AG04449 (cell line): ENCODE measurements at regions of chr6 and their contacts with region 1.

Region 1: GRCh38 chr6:154675602-154676088 is 57.6 kb upstream of the SCAF8 start:
- DNase-seq: peak; percentile 88
- H3K4me3 ChIP-seq: no peak overlapping the region
- CTCF ChIP-seq: peak; percentile 88

Region 2: GRCh38 chr6:154343473-154344308 is 332.0 kb before region 1 on chr6:
- CTCF ChIA-PET with region 1: no interaction called
- POLR2A ChIA-PET with region 1: no interaction called
- DNase-seq: no peak
- H3K4me3 ChIP-seq: no peak overlapping the region
- CTCF ChIP-seq: peak; percentile 35

Region 3: DNA sequence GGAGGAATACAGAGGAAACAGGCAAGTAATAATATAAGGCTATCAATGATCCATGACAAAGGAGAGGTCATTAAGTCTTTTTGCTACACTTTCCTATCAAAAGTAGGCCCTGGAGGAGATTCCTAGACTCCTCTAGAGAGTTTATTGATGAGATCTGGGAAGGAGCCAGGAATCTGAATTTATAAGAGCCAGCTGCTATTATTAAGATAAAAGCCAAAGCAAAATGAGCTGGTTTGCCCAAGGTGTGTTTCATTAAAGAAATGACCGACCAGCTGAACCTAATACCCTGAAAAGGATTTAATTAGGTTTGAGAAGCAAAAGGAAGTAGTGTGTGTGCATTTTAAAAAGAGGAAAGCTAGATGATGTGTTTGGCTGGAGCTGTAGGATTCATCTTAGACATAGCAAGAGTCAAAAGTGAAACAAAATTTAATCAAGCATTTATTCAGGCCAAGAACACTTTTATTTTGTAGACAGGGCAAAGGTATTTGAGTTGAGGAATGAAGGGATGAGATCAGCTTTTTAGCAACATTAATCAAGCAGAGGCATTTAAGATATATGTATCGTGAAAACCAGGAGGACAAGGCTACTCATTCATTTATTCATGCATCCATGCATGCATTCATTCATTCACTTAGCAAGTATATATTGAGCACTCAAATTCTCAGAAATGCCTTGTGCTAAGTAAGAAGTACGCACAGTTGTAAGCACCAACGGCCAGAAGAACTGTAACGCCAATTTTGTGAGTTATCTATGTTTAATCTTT is 14.0 kb after region 1 on chr6:
- CTCF ChIA-PET with region 1: interaction called, 36 read pairs
- POLR2A ChIA-PET with region 1: no interaction called
- DNase-seq: no peak
- H3K4me3 ChIP-seq: no peak overlapping the region
- CTCF ChIP-seq: no peak

Region 4: DNA sequence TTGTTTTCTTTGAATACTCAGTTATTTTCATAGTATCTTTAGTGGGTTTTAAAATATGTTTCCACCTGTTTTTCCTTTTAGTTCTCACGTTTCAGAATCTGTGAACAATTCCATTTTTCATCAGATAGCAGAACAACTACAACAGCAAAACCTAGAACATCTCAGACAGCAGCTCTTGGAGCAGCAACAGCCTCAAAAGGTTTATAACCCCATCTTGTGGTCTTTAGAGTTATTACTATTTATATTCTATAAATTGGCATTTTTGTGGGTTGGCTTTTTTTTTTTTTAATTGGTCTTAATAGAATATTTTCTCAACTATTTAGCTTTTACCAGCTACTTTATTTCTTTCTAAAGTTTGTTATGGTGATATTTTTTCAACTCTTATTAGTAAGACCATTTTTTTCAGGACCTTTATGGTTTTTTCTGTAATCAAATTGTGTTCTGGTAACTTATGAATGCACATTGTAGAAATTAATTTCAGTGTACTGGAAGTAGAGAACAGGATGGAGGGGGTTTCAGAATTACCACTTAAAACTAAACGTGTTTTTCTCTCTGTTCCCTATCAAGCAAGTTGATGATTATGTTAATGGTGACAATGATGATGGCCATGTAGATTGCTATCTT is 129.8 kb after region 1 on chr6:
- CTCF ChIA-PET with region 1: interaction called, 264 read pairs
- POLR2A ChIA-PET with region 1: no interaction called
- DNase-seq: no peak
- H3K4me3 ChIP-seq: no peak overlapping the region
- CTCF ChIP-seq: peak; percentile 19

Region 5: DNA sequence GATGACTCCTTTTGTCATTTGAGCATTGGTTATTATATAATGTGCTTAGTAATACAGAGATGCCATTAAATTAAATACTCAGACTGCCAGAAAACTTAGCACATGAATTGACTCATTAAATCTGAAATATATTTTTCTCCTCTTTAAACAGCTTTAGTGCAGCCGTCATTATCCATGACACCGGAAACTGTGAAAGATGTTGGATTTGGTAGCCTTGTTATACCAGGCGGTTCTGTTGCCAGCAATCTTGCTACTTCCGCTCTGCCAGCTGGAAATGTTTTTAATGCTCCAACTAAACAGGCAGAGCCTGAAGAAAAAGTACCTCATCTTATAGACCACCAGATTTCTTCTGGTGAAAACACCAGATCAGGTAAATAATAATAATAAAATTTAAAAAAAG is 155.1 kb after region 1 on chr6:
- CTCF ChIA-PET with region 1: interaction called, 11 read pairs
- POLR2A ChIA-PET with region 1: no interaction called
- DNase-seq: no peak
- H3K4me3 ChIP-seq: no peak overlapping the region
- CTCF ChIP-seq: no peak

Region 6: GRCh38 chr6:154868143-154868594 is 192.5 kb after region 1 on chr6:
- CTCF ChIA-PET with region 1: interaction called, 16 read pairs
- POLR2A ChIA-PET with region 1: no interaction called
- DNase-seq: no peak
- H3K4me3 ChIP-seq: no peak overlapping the region
- CTCF ChIP-seq: peak; percentile 49

Region 7: GRCh38 chr6:155026022-155026726 is 350.5 kb after region 1 on chr6:
- CTCF ChIA-PET with region 1: no interaction called
- POLR2A ChIA-PET with region 1: no interaction called
- DNase-seq: peak; percentile 50
- H3K4me3 ChIP-seq: no peak overlapping the region
- CTCF ChIP-seq: no peak